Natural killer cell (primary cell): ENCODE measurements at regions of chr10 and their contacts with region 1.

Region 1: DNA sequence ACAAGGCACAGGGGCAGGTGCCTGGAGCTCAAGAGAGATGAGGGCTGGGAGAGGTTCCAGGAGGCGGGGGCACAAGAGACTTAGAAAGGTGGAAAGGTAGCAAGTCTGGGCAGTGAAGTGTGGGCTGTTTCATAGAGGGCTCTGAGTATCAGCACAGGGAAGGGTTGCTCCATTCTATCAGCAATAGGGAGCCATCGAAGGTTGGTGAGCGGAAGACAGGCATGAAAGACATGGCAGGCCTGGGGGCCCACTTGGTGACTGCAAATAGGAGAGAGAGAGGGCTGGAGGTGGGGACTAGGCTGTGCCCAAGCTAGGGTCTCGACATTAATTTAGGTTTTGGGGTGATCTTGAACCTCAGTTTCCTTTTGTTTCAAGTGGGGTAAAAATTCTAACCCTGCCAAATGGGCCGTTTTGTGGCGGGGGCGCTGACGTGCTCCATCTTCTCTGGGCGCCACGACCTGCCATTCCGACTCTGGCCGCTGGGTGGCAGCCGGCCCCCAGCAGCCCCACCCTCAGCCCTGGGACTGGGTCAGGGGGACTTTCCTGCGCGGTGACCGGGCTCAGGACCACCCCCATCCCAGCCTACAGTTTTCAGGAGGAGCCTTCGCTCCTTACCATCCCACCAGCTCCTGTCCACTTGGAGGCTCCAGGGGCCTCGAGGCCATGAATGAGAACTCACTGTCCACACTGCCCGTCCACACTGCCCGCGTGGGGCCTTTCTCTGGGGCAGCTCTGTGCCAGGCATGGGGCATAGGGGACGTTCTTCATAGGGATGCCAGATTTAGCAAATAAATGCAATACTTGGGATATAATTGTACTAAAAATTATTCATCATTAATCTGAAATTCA is 37.2 kb upstream of the PCBD1 start:
- DNase-seq: peak; percentile 61 to 67
- ATAC-seq: peak; percentile 60 to 91 (median 89)
- H3K4me3 ChIP-seq: no peak overlapping the region
- H3K4me3 Mint-ChIP-seq: no peak overlapping the region
- H3K27ac ChIP-seq: no peak overlapping the region
- H3K27ac Mint-ChIP-seq: no peak overlapping the region
- H3K4me1 ChIP-seq: peaks cover 4% of the 10 kb centered on the region
- H3K4me1 Mint-ChIP-seq: peaks cover 7 to 9% of the 10 kb centered on the region in 2 donors
- H3K27me3 ChIP-seq: no peaks in the 10 kb centered on the region
- H3K27me3 Mint-ChIP-seq: peaks cover 0 to 12% of the 10 kb centered on the region in 2 donors
- CTCF ChIP-seq: peak; percentile 96

Region 2: DNA sequence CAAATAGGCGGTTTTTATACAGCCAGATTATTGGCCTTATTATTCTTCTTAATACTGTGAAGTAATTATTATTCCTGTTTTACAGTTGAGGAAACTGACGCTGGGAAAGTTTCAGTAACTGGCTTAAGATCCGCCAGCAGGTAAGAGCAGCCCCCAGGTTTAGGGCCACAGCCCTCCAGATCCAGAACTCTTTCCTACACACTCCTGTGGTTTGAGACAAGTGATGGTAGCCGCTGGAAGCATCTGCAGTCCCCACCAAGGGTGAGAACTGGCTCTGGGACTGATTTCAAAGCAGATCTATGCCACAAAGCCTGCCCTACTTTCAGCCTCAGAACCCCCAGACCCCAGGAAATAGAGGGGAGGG is 283.7 kb after region 1 on chr10:
- intact Hi-C with region 1: loop called (anchors 1 kb)
- DNase-seq: no peak
- ATAC-seq: no peak
- H3K4me3 ChIP-seq: no peak overlapping the region
- H3K4me3 Mint-ChIP-seq: no peak overlapping the region
- H3K27ac ChIP-seq: no peak overlapping the region
- H3K27ac Mint-ChIP-seq: no peak overlapping the region
- H3K4me1 ChIP-seq: peaks cover 18% of the 10 kb centered on the region
- H3K4me1 Mint-ChIP-seq: peaks cover 0 to 4% of the 10 kb centered on the region in 2 donors
- H3K27me3 ChIP-seq: peaks cover 26% of the 10 kb centered on the region
- H3K27me3 Mint-ChIP-seq: peaks cover 48 to 79% of the 10 kb centered on the region in 2 donors
- CTCF ChIP-seq: peak; percentile 31

Region 3: GRCh38 chr10:71285180-71285545 is 359.6 kb after region 1 on chr10:
- intact Hi-C with region 1: loop called (anchors 1 kb)
- DNase-seq: peak in 1 of 2 donors; percentile 51
- ATAC-seq: peak in 2 of 3 donors; percentile 65 to 70
- H3K4me3 ChIP-seq: no peak overlapping the region
- H3K4me3 Mint-ChIP-seq: no peak overlapping the region
- H3K27ac ChIP-seq: no peak overlapping the region
- H3K27ac Mint-ChIP-seq: no peak overlapping the region
- H3K4me1 ChIP-seq: no peaks in the 10 kb centered on the region
- H3K4me1 Mint-ChIP-seq: no peaks in the 10 kb centered on the region
- H3K27me3 ChIP-seq: no peaks in the 10 kb centered on the region
- H3K27me3 Mint-ChIP-seq: peaks cover 0 to 2% of the 10 kb centered on the region in 2 donors
- CTCF ChIP-seq: peak; percentile 59

Region 4: GRCh38 chr10:71343392-71343773 is 417.8 kb after region 1 on chr10:
- intact Hi-C with region 1: no loop called
- DNase-seq: no peak
- ATAC-seq: peak in 1 of 3 donors; percentile 22
- H3K4me3 ChIP-seq: no peak overlapping the region
- H3K4me3 Mint-ChIP-seq: no peak overlapping the region
- H3K27ac ChIP-seq: no peak overlapping the region
- H3K27ac Mint-ChIP-seq: no peak overlapping the region
- H3K4me1 ChIP-seq: peaks cover 6% of the 10 kb centered on the region
- H3K4me1 Mint-ChIP-seq: peaks cover 0 to 3% of the 10 kb centered on the region in 2 donors
- H3K27me3 ChIP-seq: no peaks in the 10 kb centered on the region
- H3K27me3 Mint-ChIP-seq: no peaks in the 10 kb centered on the region
- CTCF ChIP-seq: no peak